WTC11 (cell line): ENCODE measurements at regions of chr12 and their contacts with region 1.

Region 1: GRCh38 chr12:8544295-8544694 is 3.6 kb upstream of the CLEC4E start:
- DNase-seq: peak; percentile 81
- ATAC-seq: peak; percentile 80
- H3K4me3 Mint-ChIP-seq: no peak overlapping the region
- H3K27ac Mint-ChIP-seq: no peak overlapping the region
- H3K4me1 Mint-ChIP-seq: peaks cover 8% of the 10 kb centered on the region; the same call in 1 of the 2 replicates
- H3K27me3 Mint-ChIP-seq: no peaks in the 10 kb centered on the region; the same call in 1 of the 2 replicates
- CTCF ChIP-seq: peak; percentile 96

Region 2: DNA sequence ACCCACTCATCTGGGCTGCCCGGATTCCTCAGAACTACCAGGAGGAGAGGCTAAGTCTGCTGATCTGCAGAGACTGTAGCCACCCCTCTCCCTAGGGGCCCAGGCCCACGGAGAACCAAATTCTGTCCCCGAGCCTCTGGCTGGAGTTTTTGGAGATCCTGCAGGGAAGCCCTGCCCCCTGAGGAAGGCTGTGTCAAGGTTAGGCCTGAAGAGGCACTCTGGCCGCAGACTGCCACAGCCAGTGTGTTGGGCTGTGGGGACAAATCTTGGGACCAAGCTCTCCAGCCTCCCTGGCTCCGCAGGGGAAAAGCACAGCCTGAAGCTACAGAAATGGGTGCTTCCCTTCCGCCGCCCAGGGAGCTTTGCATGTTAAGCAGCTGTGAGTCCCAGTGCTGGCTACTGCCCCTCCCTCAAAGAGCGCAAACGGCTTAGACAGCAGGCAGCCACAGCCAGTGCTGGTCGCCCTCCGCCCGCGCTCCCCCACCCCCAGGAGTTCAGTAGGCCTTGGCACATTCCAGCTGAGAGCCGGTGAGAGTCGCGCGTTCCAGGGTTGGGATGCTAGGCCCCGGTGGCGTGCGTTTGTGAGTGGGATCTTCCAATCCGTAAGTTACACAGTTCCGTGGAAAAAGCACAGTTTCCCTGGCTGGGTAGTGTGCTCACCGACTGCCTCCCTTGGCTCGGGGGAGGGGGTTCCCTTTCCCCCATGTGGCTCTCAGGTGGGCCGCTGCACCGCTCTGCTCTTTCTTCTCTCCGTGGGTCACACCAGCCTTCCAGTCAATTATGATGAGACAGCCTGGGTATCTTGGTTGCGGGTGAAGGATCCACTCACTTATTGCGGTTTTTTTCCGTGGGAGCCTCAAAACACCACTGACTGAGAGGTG is 16.8 kb before region 1 on chr12:
- CTCF ChIA-PET with region 1: interaction called, 14 read pairs
- POLR2A ChIA-PET with region 1: no interaction called
- DNase-seq: peak; percentile 42
- ATAC-seq: peak; percentile 90
- H3K4me3 Mint-ChIP-seq: no peak overlapping the region
- H3K27ac Mint-ChIP-seq: no peak overlapping the region
- H3K4me1 Mint-ChIP-seq: peaks cover 12% of the 10 kb centered on the region
- H3K27me3 Mint-ChIP-seq: peaks cover 7% of the 10 kb centered on the region
- CTCF ChIP-seq: no peak

Region 3: DNA sequence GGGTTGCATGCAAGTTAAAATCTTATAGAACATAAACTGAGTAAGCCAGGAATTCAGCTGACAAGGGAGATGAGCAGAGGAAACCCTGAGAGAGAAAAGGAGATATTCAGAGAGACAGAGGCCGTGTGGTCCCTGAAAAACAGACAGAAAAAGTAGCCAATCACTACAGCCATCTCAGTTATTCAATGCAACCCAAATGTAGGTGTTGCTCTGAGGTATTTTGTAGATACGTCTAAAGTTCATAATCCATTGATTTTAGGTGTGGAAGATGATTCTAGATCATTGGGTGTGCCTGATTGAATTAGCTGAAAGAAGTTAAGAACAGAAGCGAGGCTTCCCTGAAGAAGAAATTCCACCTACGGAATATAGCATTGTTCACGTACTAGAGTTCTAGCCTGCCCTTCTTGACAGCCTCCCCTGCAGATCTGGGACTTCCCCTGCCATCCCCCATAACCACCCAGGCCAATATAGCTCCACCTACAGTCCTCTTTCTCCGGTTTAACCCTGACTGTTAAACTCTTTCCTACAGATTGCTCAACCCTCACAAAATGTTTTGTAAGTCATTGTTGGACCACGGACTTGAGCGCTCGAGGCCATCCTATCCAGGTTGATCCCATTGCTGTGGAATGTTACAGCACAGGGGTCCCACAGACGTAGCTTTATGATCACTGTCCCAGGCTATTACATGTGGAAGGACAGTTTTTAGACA is 46.7 kb after region 1 on chr12:
- CTCF ChIA-PET with region 1: interaction called, 20 read pairs
- POLR2A ChIA-PET with region 1: no interaction called
- DNase-seq: no peak
- ATAC-seq: peak; percentile 96
- H3K4me3 Mint-ChIP-seq: no peak overlapping the region
- H3K27ac Mint-ChIP-seq: no peak overlapping the region
- H3K4me1 Mint-ChIP-seq: peaks cover 9% of the 10 kb centered on the region
- H3K27me3 Mint-ChIP-seq: no peaks in the 10 kb centered on the region
- CTCF ChIP-seq: no peak

Region 4: DNA sequence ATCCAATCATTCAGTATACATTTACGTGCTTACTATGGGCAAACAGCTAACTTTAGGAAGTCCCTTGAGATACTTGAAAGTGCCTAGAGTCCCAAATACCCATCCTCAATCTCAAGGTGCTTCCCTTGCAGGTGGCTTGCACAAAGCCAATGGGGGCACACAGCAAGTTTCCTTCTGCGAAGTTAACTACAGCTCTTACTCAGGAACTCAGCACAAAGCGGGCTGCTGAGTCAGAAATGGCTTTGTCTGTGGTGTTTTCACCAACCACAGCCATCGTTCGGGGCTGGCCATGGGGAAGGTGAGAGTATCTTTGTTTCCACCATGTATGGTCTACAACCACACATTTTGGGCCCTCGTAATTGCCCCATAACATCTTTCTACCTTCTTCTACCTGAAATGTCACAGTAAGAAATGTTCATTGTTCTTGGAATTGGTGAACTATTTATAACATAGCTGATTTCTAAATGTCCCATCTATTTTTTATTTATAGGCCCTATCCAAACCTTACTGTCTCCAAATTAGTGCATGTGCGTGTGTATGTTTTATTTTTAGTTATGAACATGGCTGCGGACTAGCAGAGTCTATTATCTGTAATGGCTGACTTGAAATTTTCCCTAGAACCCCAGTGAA is 104.4 kb after region 1 on chr12:
- CTCF ChIA-PET with region 1: interaction called, 49 read pairs
- POLR2A ChIA-PET with region 1: no interaction called
- DNase-seq: no peak
- ATAC-seq: no peak
- H3K4me3 Mint-ChIP-seq: no peak overlapping the region
- H3K27ac Mint-ChIP-seq: no peak overlapping the region
- H3K4me1 Mint-ChIP-seq: peaks cover 20% of the 10 kb centered on the region
- H3K27me3 Mint-ChIP-seq: no peaks in the 10 kb centered on the region
- CTCF ChIP-seq: no peak

Region 5: GRCh38 chr12:8681041-8681902 is 137.0 kb after region 1 on chr12:
- CTCF ChIA-PET with region 1: interaction called, 16 read pairs
- POLR2A ChIA-PET with region 1: no interaction called
- DNase-seq: no peak
- ATAC-seq: peak; percentile 55
- H3K4me3 Mint-ChIP-seq: peak overlapping the region; percentile 64
- H3K27ac Mint-ChIP-seq: peak overlapping the region; percentile 93
- H3K4me1 Mint-ChIP-seq: peaks cover 30% of the 10 kb centered on the region
- H3K27me3 Mint-ChIP-seq: no peaks in the 10 kb centered on the region
- CTCF ChIP-seq: no peak

Region 6: DNA sequence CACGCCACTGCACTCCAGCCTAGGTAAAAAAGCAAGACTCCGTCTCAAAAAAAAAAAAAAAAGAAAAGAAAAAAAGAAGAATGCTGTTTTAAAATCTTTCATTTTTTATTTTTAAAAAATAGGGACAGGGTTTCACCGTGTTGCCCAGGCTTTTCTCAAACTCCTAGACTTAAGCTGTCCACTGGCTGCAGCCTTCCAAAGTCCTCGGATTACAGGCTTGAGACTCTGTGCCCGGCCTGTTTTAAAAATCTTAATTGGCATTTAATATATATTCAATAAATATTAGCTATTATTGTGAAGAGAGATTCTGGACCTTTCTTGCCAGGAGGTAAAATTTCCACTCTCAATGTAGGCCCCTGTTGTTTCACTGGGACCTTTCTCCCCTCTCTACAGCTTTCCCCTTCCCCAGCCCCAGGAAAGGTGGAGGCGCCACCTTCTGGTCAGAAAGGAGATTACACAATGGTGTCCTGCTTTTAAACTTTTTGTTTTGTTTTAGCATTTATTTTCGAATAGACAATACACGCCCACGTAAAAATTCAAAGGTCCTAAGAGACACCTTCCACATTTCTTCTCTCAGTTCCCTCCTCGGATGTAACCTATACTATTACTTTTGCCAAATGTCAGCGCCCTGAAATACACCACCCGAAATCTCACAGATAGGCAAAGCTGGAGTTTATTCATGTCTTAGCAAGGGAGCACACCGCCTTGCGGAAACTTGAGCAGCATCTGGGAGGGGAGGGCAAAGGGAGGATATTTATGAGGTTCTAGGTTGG is 346.2 kb after region 1 on chr12:
- CTCF ChIA-PET with region 1: interaction called, 15 read pairs
- POLR2A ChIA-PET with region 1: no interaction called
- DNase-seq: peak; percentile 72
- ATAC-seq: peak; percentile 95
- H3K4me3 Mint-ChIP-seq: peak overlapping the region; percentile 68
- H3K27ac Mint-ChIP-seq: peak overlapping the region; percentile 68
- H3K4me1 Mint-ChIP-seq: peaks cover 20% of the 10 kb centered on the region
- H3K27me3 Mint-ChIP-seq: no peaks in the 10 kb centered on the region
- CTCF ChIP-seq: peak; percentile 87